A549 (cell line): ENCODE measurements at regions of chr1 and their contacts with region 1.

Region 1: GRCh38 chr1:212994926-212995325 is 20.7 kb downstream of the ANGEL2 start:
- DNase-seq: no peak
- ATAC-seq: no peak
- H3K4me3 ChIP-seq: no peak overlapping the region
- H3K27ac ChIP-seq: peak overlapping the region; percentile 49; a peak in 3 of 6 replicates
- H3K4me1 ChIP-seq: peaks cover 18% of the 10 kb centered on the region
- CTCF ChIP-seq: no peak
- EP300 ChIP-seq: no peak
- POLR2A ChIP-seq: no peak
- RAD21 ChIP-seq: no peak

Region 2: DNA sequence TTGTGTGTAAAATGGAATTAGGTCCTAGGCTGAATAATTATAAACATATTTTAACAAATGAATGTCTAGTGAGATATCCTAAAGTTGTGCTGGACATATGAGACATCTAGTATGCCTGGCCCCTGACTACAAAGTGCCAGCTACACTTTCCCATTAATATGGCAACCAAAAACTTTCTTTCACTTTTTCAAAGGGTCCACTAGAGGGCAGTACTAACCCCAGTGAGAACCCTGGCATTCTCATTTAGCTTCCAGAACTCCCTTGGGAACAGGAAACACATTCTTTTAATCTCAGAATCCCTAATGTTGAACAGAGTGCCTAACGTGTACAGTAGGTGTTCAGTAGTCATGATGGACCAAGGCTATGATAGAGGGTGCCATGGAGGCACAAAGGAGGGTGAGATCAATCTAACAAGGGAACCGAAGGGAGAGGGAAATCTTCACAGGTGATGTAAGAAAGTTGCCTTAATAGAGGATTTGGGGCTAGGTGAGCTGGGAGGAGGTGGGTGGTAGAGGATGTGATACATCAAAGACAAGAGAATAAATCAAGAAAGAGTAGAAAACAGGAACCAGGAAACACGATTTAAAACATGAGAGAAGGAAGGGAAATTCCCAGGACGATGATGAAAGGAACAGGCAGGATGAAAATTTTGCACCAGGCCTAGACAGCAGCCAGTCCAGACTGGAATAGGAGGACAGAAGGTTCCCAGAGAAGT is 244.9 kb before region 1 on chr1:
- CTCF ChIA-PET with region 1: interaction called, 20 read pairs
- POLR2A ChIA-PET with region 1: no interaction called
- DNase-seq: peak; percentile 64 to 77
- ATAC-seq: peak; percentile 76 to 91
- H3K4me3 ChIP-seq: no peak overlapping the region
- H3K27ac ChIP-seq: peak overlapping the region in 1 of 2 experiments; percentile 59; a peak in 3 of 6 replicates
- H3K4me1 ChIP-seq: peaks cover 12% of the 10 kb centered on the region
- CTCF ChIP-seq: peak; percentile 85
- EP300 ChIP-seq: no peak
- POLR2A ChIP-seq: no peak
- RAD21 ChIP-seq: peak; percentile 61 to 64

Region 3: GRCh38 chr1:212791676-212792395 is 203.1 kb before region 1 on chr1 and contains the starts of genes NSL1 and TATDN3:
- CTCF ChIA-PET with region 1: interaction called, 11 read pairs
- POLR2A ChIA-PET with region 1: no interaction called
- DNase-seq: peak; percentile 61 to 94
- ATAC-seq: peak; percentile 95 to 96
- H3K4me3 ChIP-seq: peak within 1 kb of the TSS; percentile 70
- H3K27ac ChIP-seq: peak within 1 kb of the TSS; percentile 87 to 95
- H3K4me1 ChIP-seq: peaks cover 23% of the 10 kb centered on the region
- CTCF ChIP-seq: 0 out of 3 replicates have a peak, but pooled peaks have one; percentile 11
- EP300 ChIP-seq: no peak
- POLR2A ChIP-seq: peak; percentile 72
- RAD21 ChIP-seq: peak in 1 of 2 experiments; percentile 42; a peak in 2 of 5 replicates
- polyA plus RNA-seq, gene NSL1: 47.9 and 56.9 TPM in 2 replicates
- polyA plus RNA-seq, gene TATDN3: 20.3 and 22.6 TPM in 2 replicates

Region 4: GRCh38 chr1:212967801-212968200 is 27.1 kb before region 1 on chr1:
- CTCF ChIA-PET with region 1: interaction called, 12 read pairs
- POLR2A ChIA-PET with region 1: no interaction called
- DNase-seq: peak; percentile 75 to 81
- ATAC-seq: peak; percentile 94 to 99
- H3K4me3 ChIP-seq: no peak overlapping the region
- H3K27ac ChIP-seq: peak overlapping the region in 1 of 2 experiments; percentile 44; a peak in 3 of 6 replicates
- H3K4me1 ChIP-seq: peaks cover 9% of the 10 kb centered on the region; the same call in 2 of the 3 replicates
- CTCF ChIP-seq: peak; percentile 22; the same call in 2 of the 3 replicates
- EP300 ChIP-seq: no peak
- POLR2A ChIP-seq: no peak
- RAD21 ChIP-seq: no peak

Region 5: GRCh38 chr1:212981571-212982328 is 13.2 kb before region 1 on chr1:
- CTCF ChIA-PET with region 1: interaction called, 32 read pairs
- POLR2A ChIA-PET with region 1: no interaction called
- DNase-seq: no peak
- ATAC-seq: no peak; a peak in 1 of 6 replicates
- H3K4me3 ChIP-seq: no peak overlapping the region
- H3K27ac ChIP-seq: peak overlapping the region; percentile 5 to 66; a peak in 3 of 6 replicates
- H3K4me1 ChIP-seq: peaks cover 27% of the 10 kb centered on the region
- CTCF ChIP-seq: no peak
- EP300 ChIP-seq: no peak
- POLR2A ChIP-seq: no peak
- RAD21 ChIP-seq: no peak

Region 6: DNA sequence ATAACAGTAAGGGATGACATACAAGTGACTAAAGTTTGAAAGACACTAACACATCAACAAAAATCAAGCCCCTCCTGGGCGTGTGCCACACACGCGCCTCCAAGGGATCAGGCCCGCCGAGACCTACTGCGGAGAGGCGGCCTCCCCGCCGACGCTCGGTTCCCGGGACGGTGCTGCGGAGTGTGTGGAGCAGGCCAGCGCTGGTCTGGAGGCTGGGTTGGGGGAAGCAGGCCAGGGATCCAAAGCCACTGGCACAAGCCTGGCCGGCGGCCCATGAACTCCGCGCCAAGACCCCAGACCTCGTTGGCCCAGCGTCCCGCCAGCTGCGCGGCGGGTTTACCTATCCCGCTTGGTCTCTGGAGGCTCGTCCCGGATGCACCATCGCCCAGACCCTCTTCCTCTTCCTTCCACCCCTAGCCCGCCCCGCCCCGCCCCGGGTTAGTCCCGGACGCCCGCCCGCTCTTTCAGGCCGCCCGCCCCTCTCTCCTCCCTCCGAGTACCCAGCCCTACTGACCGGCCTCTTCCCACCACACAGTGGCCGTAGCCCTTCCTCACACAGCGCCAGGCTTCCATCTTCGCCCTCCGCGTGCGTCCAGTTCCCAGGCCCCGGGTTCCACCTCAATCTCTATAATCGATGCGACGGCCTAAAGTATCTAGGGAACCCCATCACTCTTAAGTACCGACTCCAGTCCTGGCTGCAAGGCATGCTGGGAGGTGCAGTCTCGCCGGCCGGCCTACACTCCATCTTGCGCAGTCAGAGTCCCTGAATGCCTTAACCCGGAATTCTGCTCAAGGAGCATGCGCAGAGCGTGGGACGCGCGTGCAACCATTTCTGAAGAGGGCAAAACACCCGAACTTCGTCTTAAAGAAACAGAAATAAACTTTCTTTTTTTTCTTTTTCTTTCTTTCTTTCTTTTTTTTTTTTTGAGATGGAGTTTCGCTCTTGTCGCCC is 20.4 kb after region 1 on chr1 and contains the start of gene ANGEL2:
- CTCF ChIA-PET with region 1: interaction called, 10 read pairs
- POLR2A ChIA-PET with region 1: no interaction called
- DNase-seq: peak; percentile 95 to 98
- ATAC-seq: peak; percentile 97 to 98
- H3K4me3 ChIP-seq: peak within 1 kb of the TSS; percentile 60
- H3K27ac ChIP-seq: peak within 1 kb of the TSS; percentile 92 to 94
- H3K4me1 ChIP-seq: peaks cover 11% of the 10 kb centered on the region; the same call in 2 of the 3 replicates
- CTCF ChIP-seq: no peak
- EP300 ChIP-seq: no peak
- POLR2A ChIP-seq: peak; percentile 71
- RAD21 ChIP-seq: no peak
- polyA plus RNA-seq, gene ANGEL2: 38.9 and 42.3 TPM in 2 replicates

Region 7: DNA sequence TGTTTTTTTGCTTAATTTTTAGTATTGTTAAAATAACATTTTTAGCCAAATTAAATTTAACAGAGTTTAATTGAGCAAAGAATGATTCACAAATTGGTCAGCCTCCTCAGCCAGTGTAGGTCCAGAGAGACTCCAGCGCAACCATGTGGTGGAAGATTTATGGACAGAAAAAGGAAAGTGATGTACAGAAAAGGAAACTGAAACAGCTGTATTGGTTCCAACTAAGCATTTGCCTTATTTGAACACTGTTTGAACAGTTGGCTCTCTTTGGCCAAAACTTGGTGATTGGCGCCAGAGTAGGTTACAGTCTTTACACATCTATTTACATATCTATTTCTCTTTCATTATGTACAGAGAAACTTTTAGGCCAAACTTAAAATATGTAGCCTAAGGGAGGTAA is 75.5 kb after region 1 on chr1:
- CTCF ChIA-PET with region 1: no interaction called
- POLR2A ChIA-PET with region 1: no interaction called
- DNase-seq: peak in 1 of 2 experiments; percentile 34
- ATAC-seq: peak in 1 of 2 experiments; percentile 77; a peak in 3 of 6 replicates
- H3K4me3 ChIP-seq: no peak overlapping the region
- H3K27ac ChIP-seq: no peak overlapping the region
- H3K4me1 ChIP-seq: peaks cover 9% of the 10 kb centered on the region; the same call in 2 of the 3 replicates
- CTCF ChIP-seq: peak; percentile 18; the same call in 1 of the 3 replicates
- EP300 ChIP-seq: no peak
- POLR2A ChIP-seq: no peak
- RAD21 ChIP-seq: peak; percentile 30 to 32; a peak in 3 of 5 replicates

Region 8: DNA sequence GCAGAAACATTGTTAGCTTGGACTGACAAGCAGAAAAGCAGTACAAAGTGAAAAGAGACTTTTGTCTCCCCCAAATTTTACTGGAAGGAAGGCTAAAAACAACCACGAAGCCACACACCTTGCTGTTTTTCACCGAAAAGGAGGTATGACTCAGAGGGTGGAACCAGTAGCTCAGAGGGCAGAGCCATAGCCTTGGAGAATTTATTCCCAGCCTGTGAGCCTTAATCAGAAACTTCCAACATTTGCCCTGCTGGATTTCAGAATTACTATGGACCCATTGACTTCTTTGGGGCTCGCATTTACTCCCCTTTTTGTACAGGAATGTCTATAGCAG is 88.2 kb after region 1 on chr1:
- CTCF ChIA-PET with region 1: no interaction called
- POLR2A ChIA-PET with region 1: no interaction called
- DNase-seq: no peak
- ATAC-seq: no peak
- H3K4me3 ChIP-seq: no peak overlapping the region
- H3K27ac ChIP-seq: no peak overlapping the region
- H3K4me1 ChIP-seq: no peaks in the 10 kb centered on the region
- CTCF ChIP-seq: no peak
- EP300 ChIP-seq: no peak
- POLR2A ChIP-seq: no peak
- RAD21 ChIP-seq: no peak

Region 9: DNA sequence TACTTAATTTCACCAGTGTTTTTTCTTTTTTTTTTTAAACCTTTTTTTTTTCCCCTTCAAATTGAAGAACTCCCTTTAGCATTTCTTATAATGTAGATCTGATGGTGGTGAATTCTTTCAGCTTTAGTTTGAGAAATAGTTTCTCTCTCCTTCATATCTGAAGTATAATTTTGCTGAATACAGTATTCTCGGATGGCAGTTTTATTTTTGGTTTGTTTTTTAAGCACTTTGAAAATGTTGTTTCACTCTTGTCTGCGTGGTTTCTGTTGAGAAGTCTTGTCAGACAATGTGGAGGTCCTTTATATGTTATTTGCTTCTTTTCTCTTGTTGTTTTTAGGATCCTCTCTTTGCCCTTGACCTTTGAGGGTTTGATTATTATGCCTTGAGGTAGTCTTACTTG is 191.2 kb after region 1 on chr1:
- CTCF ChIA-PET with region 1: no interaction called
- POLR2A ChIA-PET with region 1: no interaction called
- DNase-seq: no peak
- ATAC-seq: no peak
- H3K4me3 ChIP-seq: no peak overlapping the region
- H3K27ac ChIP-seq: no peak overlapping the region
- H3K4me1 ChIP-seq: 0 out of 3 replicates have a peak, but pooled peaks cover 5% of the 10 kb centered on the region
- CTCF ChIP-seq: no peak
- EP300 ChIP-seq: no peak
- POLR2A ChIP-seq: no peak
- RAD21 ChIP-seq: no peak